OCI-LY7 (cell line): ENCODE measurements at regions of chr12 and their contacts with region 1.

Region 1: DNA sequence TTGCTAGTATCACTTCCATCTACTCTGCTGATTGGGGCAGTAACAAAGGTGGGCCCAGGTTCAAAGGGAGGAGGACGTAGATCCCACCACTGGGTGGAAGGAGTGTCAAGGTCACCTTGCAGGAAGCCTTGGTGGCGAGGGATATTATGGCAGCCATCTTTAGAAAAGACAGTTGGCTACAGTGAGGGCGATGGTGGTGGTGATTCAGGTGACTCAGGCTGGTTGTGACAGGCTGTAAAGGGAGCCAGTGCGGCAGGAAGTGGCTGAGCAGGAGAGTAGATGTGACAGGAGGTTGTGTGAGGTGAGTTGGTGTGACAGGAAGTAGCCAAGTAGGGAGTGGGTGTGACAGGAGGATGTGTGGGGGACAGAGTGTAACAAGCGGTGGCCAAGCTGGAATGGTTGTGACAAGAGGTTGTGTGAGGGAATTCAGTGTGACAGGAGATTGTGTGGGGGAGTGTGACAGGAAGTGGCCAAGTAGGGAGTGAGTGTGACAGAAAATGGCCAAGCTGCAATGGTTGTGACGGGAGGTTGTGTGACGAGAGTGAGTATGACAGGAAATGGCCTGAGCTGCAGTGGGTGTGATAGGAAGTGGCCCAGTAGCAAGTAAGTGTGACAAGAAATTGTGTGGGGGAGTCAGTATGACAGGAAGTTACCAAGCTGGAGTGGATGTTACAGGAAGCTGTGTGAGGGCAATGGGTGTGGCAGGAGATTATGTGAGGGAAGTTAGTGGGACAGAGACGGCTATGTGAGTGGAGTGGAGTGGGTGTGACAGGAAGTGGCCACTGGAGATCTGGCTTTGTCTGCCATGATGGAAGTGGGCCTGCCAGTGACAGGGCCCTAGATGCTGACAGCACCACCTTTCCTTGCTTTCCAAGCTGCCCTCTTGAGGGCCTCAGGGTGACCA is 136.5 kb upstream of the MYL2 start:
- DNase-seq: peak; percentile 83
- H3K4me3 ChIP-seq: peak overlapping the region; percentile 18
- H3K27ac ChIP-seq: peak overlapping the region; percentile 81
- H3K4me1 ChIP-seq: peaks cover 27% of the 10 kb centered on the region
- CTCF ChIP-seq: no peak

Region 2: GRCh38 chr12:111093428-111094142 is 36.7 kb after region 1 on chr12:
- CTCF ChIA-PET with region 1: interaction called, 13 read pairs
- POLR2A ChIA-PET with region 1: no interaction called
- intact Hi-C with region 1: no loop called
- DNase-seq: peak; percentile 70
- H3K4me3 ChIP-seq: peak overlapping the region; percentile 42
- H3K27ac ChIP-seq: peak overlapping the region; percentile 82
- H3K4me1 ChIP-seq: peaks cover 89% of the 10 kb centered on the region
- CTCF ChIP-seq: no peak